Panc1 (cell line): ENCODE measurements at regions of chr7 and their contacts with region 1.

Region 1: GRCh38 chr7:111103678-111104274 is 12.8 kb downstream of the LRRN3 start:
- DNase-seq: no peak
- ATAC-seq: no peak
- H3K4me3 ChIP-seq: no peak overlapping the region
- H3K27ac ChIP-seq: no peak overlapping the region
- H3K4me1 ChIP-seq: no peaks in the 10 kb centered on the region
- H3K27me3 ChIP-seq: no peaks in the 10 kb centered on the region
- CTCF ChIP-seq: no peak

Region 2: DNA sequence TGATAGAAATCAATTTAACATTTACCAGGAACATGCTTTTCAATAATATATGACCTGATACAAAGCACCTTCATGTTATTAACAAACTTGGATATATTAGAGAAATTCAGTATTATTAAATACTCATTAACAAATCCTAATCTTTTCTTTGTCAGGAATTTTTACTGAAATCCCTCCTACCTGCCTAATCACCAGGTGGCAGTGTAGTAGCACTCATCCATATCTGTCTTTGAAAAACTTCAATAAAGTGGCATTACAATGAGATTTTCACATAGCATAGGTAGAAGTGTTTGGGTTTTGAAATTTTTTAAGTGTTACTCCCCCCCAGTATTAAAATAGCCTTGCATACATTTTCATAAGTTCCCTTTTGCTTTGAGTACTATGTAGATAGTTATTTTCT is 1259.4 kb before region 1 on chr7:
- CTCF ChIA-PET with region 1: no interaction called
- POLR2A ChIA-PET with region 1: no interaction called
- in situ Hi-C with region 1: no loop called
- intact Hi-C with region 1: loop called (anchors 10 kb)
- DNase-seq: no peak
- ATAC-seq: no peak
- H3K4me3 ChIP-seq: no peak overlapping the region
- H3K27ac ChIP-seq: no peak overlapping the region
- H3K4me1 ChIP-seq: no peaks in the 10 kb centered on the region
- H3K27me3 ChIP-seq: no peaks in the 10 kb centered on the region
- CTCF ChIP-seq: peak; percentile 42; the same call in 1 of the 2 replicates

Region 3: GRCh38 chr7:111045449-111045848 is 58.3 kb before region 1 on chr7:
- CTCF ChIA-PET with region 1: no interaction called
- POLR2A ChIA-PET with region 1: no interaction called
- in situ Hi-C with region 1: no loop called
- intact Hi-C with region 1: no loop called
- DNase-seq: no peak
- ATAC-seq: no peak
- H3K4me3 ChIP-seq: no peak overlapping the region
- H3K27ac ChIP-seq: no peak overlapping the region
- H3K4me1 ChIP-seq: no peaks in the 10 kb centered on the region
- H3K27me3 ChIP-seq: no peaks in the 10 kb centered on the region
- CTCF ChIP-seq: no peak